ENCODE measurements at regions of chr18 and their contacts with region 1.

Region 1: DNA sequence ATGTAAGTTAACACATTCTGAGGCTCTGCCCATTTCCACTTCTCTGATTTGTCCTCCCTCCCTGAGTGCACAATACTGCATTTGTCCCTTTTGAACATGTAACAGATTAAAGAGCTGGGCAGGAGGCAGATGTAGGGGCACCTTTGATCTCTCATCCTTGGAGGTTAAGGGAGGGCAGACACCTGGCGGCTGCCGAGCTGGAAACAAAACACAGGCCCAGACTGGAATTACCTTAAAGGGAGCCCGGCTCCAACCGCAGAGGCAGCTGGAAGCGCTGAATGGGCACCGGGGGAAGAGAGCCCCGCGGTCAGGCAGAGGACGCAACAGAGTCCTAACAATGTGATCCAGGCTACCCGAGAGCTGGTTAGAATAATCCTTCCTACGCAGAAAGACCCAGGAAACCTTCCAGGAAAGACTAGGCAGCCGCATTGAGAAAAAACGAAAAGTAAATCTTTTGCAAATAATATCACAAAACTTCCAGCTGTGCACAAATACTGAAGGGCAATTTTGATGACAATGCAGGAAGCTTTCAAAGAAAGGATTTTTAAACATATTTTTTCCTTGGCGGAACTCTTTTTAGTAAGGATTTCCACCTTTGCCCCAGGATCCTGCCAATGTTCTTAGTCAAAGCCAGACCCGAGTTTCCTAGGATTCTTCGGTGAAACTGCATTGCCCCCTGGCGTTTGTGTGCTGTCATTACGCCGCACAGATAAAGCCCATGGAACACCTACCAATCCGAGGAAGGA is 216.0 kb downstream of the TGIF1 start:
- DNase-seq: peak; percentile 90 to 91
- H3K4me3 ChIP-seq: peak overlapping the region; percentile 2; the same call in 1 of the 2 replicates
- H3K4me3 Mint-ChIP-seq: peak overlapping the region; percentile 73
- H3K27ac Mint-ChIP-seq: peak overlapping the region; percentile 82
- H3K4me1 ChIP-seq: peaks cover 26% of the 10 kb centered on the region
- H3K4me1 Mint-ChIP-seq: peaks cover 33% of the 10 kb centered on the region
- H3K27me3 ChIP-seq: no peaks in the 10 kb centered on the region
- H3K27me3 Mint-ChIP-seq: no peaks in the 10 kb centered on the region
- CTCF ChIP-seq: peak; percentile 82 to 90

Region 2: GRCh38 chr18:3245853-3246634 is 419.9 kb before region 1 on chr18:
- CTCF ChIA-PET with region 1: interaction called, 5 read pairs
- POLR2A ChIA-PET with region 1: interaction called, 4 read pairs
- intact Hi-C with region 1: loop called (anchors 1 kb)
- DNase-seq: peak; percentile 88 to 89
- H3K4me3 ChIP-seq: peak overlapping the region; percentile 47
- H3K4me3 Mint-ChIP-seq: peak overlapping the region; percentile 78
- H3K27ac Mint-ChIP-seq: peak overlapping the region; percentile 98
- H3K4me1 ChIP-seq: peaks cover 12% of the 10 kb centered on the region
- H3K4me1 Mint-ChIP-seq: peaks cover 22% of the 10 kb centered on the region
- H3K27me3 ChIP-seq: no peaks in the 10 kb centered on the region
- H3K27me3 Mint-ChIP-seq: no peaks in the 10 kb centered on the region
- CTCF ChIP-seq: peak; percentile 90 to 91

Region 3: GRCh38 chr18:3380384-3380961 is 285.5 kb before region 1 on chr18:
- CTCF ChIA-PET with region 1: interaction called, 5 read pairs
- POLR2A ChIA-PET with region 1: no interaction called
- intact Hi-C with region 1: loop called (anchors 1 kb)
- DNase-seq: no peak
- H3K4me3 ChIP-seq: no peak overlapping the region
- H3K4me3 Mint-ChIP-seq: no peak overlapping the region
- H3K27ac Mint-ChIP-seq: no peak overlapping the region
- H3K4me1 ChIP-seq: peaks cover 15% of the 10 kb centered on the region
- H3K4me1 Mint-ChIP-seq: peaks cover 13% of the 10 kb centered on the region
- H3K27me3 ChIP-seq: no peaks in the 10 kb centered on the region
- H3K27me3 Mint-ChIP-seq: no peaks in the 10 kb centered on the region
- CTCF ChIP-seq: no peak

Region 4: GRCh38 chr18:3585656-3586509 is 80.1 kb before region 1 on chr18:
- CTCF ChIA-PET with region 1: interaction called, 13 read pairs
- POLR2A ChIA-PET with region 1: interaction called, 4 read pairs
- intact Hi-C with region 1: no loop called
- DNase-seq: peak; percentile 85 to 87
- H3K4me3 ChIP-seq: no peak overlapping the region
- H3K4me3 Mint-ChIP-seq: no peak overlapping the region
- H3K27ac Mint-ChIP-seq: no peak overlapping the region
- H3K4me1 ChIP-seq: peaks cover 7% of the 10 kb centered on the region; the same call in 1 of the 2 replicates
- H3K4me1 Mint-ChIP-seq: peaks cover 16% of the 10 kb centered on the region
- H3K27me3 ChIP-seq: no peaks in the 10 kb centered on the region
- H3K27me3 Mint-ChIP-seq: no peaks in the 10 kb centered on the region
- CTCF ChIP-seq: peak; percentile 65 to 84

Region 5: GRCh38 chr18:3612315-3612714 is 53.6 kb before region 1 on chr18:
- CTCF ChIA-PET with region 1: interaction called, 22 read pairs
- POLR2A ChIA-PET with region 1: interaction called, 8 read pairs
- intact Hi-C with region 1: no loop called
- DNase-seq: no peak
- H3K4me3 ChIP-seq: no peak overlapping the region
- H3K4me3 Mint-ChIP-seq: no peak overlapping the region
- H3K27ac Mint-ChIP-seq: peak overlapping the region; percentile 36
- H3K4me1 ChIP-seq: peaks cover 54% of the 10 kb centered on the region
- H3K4me1 Mint-ChIP-seq: peaks cover 35% of the 10 kb centered on the region
- H3K27me3 ChIP-seq: no peaks in the 10 kb centered on the region
- H3K27me3 Mint-ChIP-seq: no peaks in the 10 kb centered on the region
- CTCF ChIP-seq: no peak

Region 6: GRCh38 chr18:3652380-3653262 is 13.3 kb before region 1 on chr18:
- CTCF ChIA-PET with region 1: interaction called, 31 read pairs
- POLR2A ChIA-PET with region 1: interaction called, 16 read pairs
- intact Hi-C with region 1: loop called (anchors 1 kb)
- DNase-seq: peak; percentile 93 to 96
- H3K4me3 ChIP-seq: no peak overlapping the region
- H3K4me3 Mint-ChIP-seq: peak overlapping the region; percentile 67
- H3K27ac Mint-ChIP-seq: peak overlapping the region; percentile 90
- H3K4me1 ChIP-seq: peaks cover 82% of the 10 kb centered on the region
- H3K4me1 Mint-ChIP-seq: peaks cover 52% of the 10 kb centered on the region
- H3K27me3 ChIP-seq: no peaks in the 10 kb centered on the region
- H3K27me3 Mint-ChIP-seq: no peaks in the 10 kb centered on the region
- CTCF ChIP-seq: peak in 1 of 2 experiments; percentile 19

Measured in Caco-2 (cell line).